Heart left ventricle (tissue), 16 donors: ENCODE measurements at regions of chr3 and their contacts with region 1.

Region 1: DNA sequence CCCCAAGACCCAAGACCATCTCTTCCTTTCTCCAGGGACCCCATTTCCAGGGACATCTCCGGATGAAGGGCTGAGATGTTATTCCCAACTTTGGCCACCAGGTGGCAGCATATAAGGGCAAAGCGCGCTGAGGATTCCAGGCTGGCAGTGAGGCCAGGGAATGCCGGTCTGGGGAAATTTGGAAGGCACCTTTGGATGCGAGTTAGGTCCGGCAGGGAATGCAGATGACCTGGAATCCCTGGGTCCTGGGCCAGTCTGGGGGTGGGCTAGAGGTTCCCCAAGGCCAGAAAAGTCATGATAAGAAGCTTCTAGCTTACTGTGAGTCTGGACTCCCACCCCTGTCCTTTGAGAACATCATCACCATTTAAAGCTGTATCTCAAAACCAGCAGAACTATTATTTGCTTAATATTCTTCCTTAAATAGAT is 1.6 kb upstream of the CHST13 start:
- DNase-seq: peak; percentile 50 to 65 (median 56)
- ATAC-seq: peak in 2 of 4 donors; percentile 38 to 53
- H3K4me3 ChIP-seq: no peak overlapping the region
- H3K27ac ChIP-seq: no peak overlapping the region
- H3K4me1 ChIP-seq: peaks cover 0 to 17% (median 5%) of the 10 kb centered on the region in 12 donors
- H3K27me3 ChIP-seq: peaks cover 0 to 25% (median 7%) of the 10 kb centered on the region in 9 donors
- CTCF ChIP-seq: peak; percentile 68 to 96 (median 91)
- POLR2A ChIP-seq: no peak

Region 2: DNA sequence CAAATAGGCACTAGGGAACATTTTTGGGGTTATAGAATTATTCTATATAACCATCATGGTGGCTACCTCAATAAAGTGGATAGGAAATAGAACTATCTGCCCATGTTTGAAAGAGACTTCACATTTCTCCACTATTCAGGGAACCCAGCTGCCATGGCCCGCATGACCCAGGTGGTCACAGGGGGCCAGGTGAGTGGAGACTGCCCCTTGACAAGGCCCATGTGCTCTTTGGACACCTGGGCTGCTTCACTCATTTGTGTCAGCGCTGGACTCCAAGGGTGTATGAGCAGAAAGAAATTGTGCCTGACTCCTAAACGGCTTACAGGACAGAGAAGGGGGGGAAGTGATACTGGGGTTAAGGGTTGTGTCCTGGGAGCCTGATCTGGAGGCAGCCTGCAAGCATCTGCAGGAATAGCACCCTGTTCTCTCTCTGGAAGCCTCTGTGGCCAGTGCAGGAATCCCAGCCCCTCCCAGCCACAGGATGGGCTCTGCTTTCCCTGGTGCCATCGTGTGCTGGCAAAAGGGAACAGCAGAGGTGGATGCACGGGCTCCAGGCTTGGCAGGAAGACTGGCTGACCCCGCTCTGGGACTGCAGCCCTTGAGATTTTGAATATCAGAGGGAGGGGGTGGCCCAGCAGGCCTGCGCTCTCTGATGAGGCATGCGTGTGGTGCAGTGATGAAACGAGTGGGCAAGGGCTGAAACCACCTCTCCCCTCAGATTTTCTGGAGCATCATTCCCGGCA is 45.5 kb after region 1 on chr3:
- intact Hi-C with region 1: loop called in 7 of 10 experiments (anchors 2 to 5 kb)
- DNase-seq: peak in 3 of 5 donors; percentile 20 to 53 (median 49)
- ATAC-seq: peak; percentile 81 to 87 (median 84)
- H3K4me3 ChIP-seq: no peak overlapping the region
- H3K27ac ChIP-seq: no peak overlapping the region
- H3K4me1 ChIP-seq: no peaks in the 10 kb centered on the region
- H3K27me3 ChIP-seq: peaks cover 0 to 5% (median 0%) of the 10 kb centered on the region in 9 donors
- CTCF ChIP-seq: peak in 10 of 12 donors; percentile 11 to 48 (median 25)
- POLR2A ChIP-seq: no peak

Region 3: GRCh38 chr3:126654571-126655383 is 132.4 kb after region 1 on chr3 and contains the start of gene TXNRD3:
- intact Hi-C with region 1: loop called in 1 of 10 experiments (anchors 10 kb)
- DNase-seq: peak; percentile 82 to 90 (median 85)
- ATAC-seq: peak; percentile 88 to 98 (median 95)
- H3K4me3 ChIP-seq: peak within 1 kb of the TSS; percentile 44 to 96 (median 75)
- H3K27ac ChIP-seq: peak within 1 kb of the TSS; percentile 55 to 89 (median 80)
- H3K4me1 ChIP-seq: peaks cover 0 to 20% (median 6%) of the 10 kb centered on the region in 12 donors
- H3K27me3 ChIP-seq: peaks cover 0 to 7% (median 0%) of the 10 kb centered on the region in 9 donors
- CTCF ChIP-seq: peak in 5 of 12 donors; percentile 8 to 32 (median 10)
- POLR2A ChIP-seq: peak in 1 of 2 donors; percentile 75
- total RNA-seq, gene TXNRD3: 2.9 to 8.2 (median 6.0) TPM

Region 4: DNA sequence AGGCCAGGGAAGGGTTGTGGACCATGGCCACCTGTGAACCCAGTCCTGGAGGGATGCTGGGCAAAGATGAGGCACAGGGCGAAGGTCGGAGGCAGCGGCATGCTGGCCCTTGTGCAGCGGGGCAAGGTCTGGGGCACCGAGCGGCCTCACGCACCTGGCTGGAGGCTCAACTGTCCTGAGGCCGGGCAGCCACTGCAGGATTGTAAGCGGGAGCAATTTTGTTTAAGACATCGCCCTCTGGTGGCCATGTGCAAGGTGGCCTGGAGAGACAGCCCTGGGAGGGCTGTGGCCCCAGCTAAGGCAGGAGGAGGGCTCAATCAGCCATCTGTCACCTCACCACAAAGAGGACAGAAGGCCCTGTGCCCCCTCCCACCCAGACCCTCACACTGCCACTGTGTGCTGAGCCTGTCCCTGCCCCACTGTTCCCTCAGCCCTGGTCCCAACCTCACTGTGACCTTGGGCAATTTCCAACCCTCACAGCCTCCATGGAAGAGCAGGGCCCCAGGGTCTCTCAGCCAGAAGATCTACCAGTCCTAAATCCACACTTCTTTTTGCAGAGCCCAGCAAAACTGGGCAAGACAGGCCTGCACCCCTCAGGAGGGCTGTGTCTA is 1021.9 kb after region 1 on chr3:
- intact Hi-C with region 1: loop called in 7 of 10 experiments (anchors 2 to 10 kb)
- DNase-seq: peak; percentile 61 to 81 (median 76)
- ATAC-seq: peak in 3 of 4 donors; percentile 44 to 58 (median 46)
- H3K4me3 ChIP-seq: no peak overlapping the region
- H3K27ac ChIP-seq: no peak overlapping the region
- H3K4me1 ChIP-seq: peaks cover 0 to 16% (median 5%) of the 10 kb centered on the region in 12 donors
- H3K27me3 ChIP-seq: no peaks in the 10 kb centered on the region
- CTCF ChIP-seq: peak; percentile 68 to 85 (median 76)
- POLR2A ChIP-seq: no peak